MCF 10A (cell line): ENCODE measurements at regions of chr4 and their contacts with region 1.

Region 1: GRCh38 chr4:26330186-26330787 is 9.5 kb downstream of the RBPJ start:
- DNase-seq: peak; percentile 69
- H3K4me3 Mint-ChIP-seq: no peak overlapping the region
- H3K27ac Mint-ChIP-seq: no peak overlapping the region
- H3K4me1 Mint-ChIP-seq: peaks cover 32% of the 10 kb centered on the region
- H3K27me3 Mint-ChIP-seq: no peaks in the 10 kb centered on the region
- CTCF ChIP-seq: peak; percentile 54

Region 2: GRCh38 chr4:25986807-25987206 is 343.5 kb before region 1 on chr4:
- CTCF ChIA-PET with region 1: interaction called, 95 read pairs
- POLR2A ChIA-PET with region 1: interaction called, 5 read pairs
- intact Hi-C with region 1: loop called (anchors 1 kb)
- DNase-seq: no peak
- H3K4me3 Mint-ChIP-seq: no peak overlapping the region
- H3K27ac Mint-ChIP-seq: no peak overlapping the region
- H3K4me1 Mint-ChIP-seq: no peaks in the 10 kb centered on the region
- H3K27me3 Mint-ChIP-seq: no peaks in the 10 kb centered on the region
- CTCF ChIP-seq: no peak

Region 3: DNA sequence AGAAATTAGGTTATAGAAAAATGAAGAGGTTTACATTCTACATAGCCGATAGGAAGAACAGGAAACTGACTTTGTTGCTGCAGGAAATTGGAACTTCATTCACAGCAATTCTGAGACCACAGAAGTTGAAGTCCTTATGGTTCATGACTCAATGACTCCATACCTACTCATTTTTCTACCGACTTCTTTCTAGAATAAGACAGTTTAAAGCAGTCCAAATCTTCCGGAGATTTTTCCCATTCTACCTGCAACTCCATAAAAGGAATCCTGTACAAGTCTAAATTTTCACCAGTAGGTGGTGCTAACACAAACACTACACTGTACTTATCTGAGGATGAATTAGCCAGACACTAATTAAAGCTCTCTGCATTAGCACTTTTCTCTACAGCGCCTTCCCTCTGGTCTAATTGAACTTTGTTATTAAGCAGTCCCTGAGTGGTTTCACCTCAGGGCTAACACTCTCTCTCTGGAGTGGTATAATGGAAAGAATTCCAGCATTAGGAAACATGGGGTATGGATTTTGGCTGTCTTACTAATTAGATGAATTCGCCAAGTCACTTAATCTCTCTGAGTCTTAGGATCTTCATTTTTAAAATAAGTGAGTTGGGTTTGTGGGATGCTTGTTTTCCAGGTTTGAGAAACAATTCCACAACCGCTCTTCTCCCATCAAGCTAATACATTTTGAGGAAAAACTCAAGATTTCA is 248.3 kb before region 1 on chr4:
- CTCF ChIA-PET with region 1: interaction called, 40 read pairs
- POLR2A ChIA-PET with region 1: no interaction called
- intact Hi-C with region 1: loop called (anchors 1 kb)
- DNase-seq: peak; percentile 69
- H3K4me3 Mint-ChIP-seq: no peak overlapping the region
- H3K27ac Mint-ChIP-seq: no peak overlapping the region
- H3K4me1 Mint-ChIP-seq: peaks cover 25% of the 10 kb centered on the region
- H3K27me3 Mint-ChIP-seq: no peaks in the 10 kb centered on the region
- CTCF ChIP-seq: peak; percentile 57

Region 4: GRCh38 chr4:26349496-26349895 is 19.2 kb after region 1 on chr4:
- CTCF ChIA-PET with region 1: interaction called, 51 read pairs
- POLR2A ChIA-PET with region 1: interaction called, 4 read pairs
- intact Hi-C with region 1: no loop called
- DNase-seq: no peak
- H3K4me3 Mint-ChIP-seq: no peak overlapping the region
- H3K27ac Mint-ChIP-seq: no peak overlapping the region
- H3K4me1 Mint-ChIP-seq: peaks cover 9% of the 10 kb centered on the region
- H3K27me3 Mint-ChIP-seq: no peaks in the 10 kb centered on the region
- CTCF ChIP-seq: no peak

Region 5: GRCh38 chr4:26402458-26402857 is 72.2 kb after region 1 on chr4:
- CTCF ChIA-PET with region 1: interaction called, 157 read pairs
- POLR2A ChIA-PET with region 1: interaction called, 3 read pairs
- intact Hi-C with region 1: no loop called
- DNase-seq: no peak
- H3K4me3 Mint-ChIP-seq: no peak overlapping the region
- H3K27ac Mint-ChIP-seq: peak overlapping the region; percentile 8
- H3K4me1 Mint-ChIP-seq: peaks cover 14% of the 10 kb centered on the region
- H3K27me3 Mint-ChIP-seq: no peaks in the 10 kb centered on the region
- CTCF ChIP-seq: no peak

Region 6: DNA sequence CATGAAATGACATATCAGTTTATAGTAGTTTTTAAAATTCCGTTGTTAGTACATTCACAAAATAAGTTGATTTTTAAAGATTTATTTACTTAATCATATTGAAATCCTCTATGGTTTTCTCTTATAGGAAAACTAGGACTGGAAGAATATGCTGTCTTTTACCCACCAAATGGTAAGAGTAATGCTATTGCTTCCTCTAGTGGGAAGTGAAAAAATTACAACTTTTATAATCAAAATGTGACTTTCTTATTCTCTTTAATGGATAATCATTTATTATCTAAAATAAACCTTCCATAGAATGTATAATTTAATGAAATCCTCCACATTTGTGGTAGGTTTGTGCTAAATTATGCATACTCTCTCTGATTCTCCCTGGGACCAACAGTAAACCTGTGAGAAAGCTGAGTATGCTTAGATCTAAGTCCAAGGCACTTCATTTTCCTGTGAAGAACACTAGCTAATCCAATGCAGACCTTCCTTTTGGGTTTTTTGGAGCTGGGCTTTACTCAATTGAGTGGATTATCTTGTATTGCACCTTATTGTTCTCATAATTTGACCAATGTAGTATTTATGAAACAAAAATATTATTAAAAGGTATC is 389.8 kb after region 1 on chr4:
- CTCF ChIA-PET with region 1: interaction called, 7 read pairs
- POLR2A ChIA-PET with region 1: no interaction called
- intact Hi-C with region 1: loop called (anchors 5 kb)
- DNase-seq: peak; percentile 35
- H3K4me3 Mint-ChIP-seq: no peak overlapping the region
- H3K27ac Mint-ChIP-seq: no peak overlapping the region
- H3K4me1 Mint-ChIP-seq: peaks cover 8% of the 10 kb centered on the region
- H3K27me3 Mint-ChIP-seq: no peaks in the 10 kb centered on the region
- CTCF ChIP-seq: peak; percentile 67